Sigmoid colon (tissue), 7 donors: ENCODE measurements at regions of chr19 and their contacts with region 1.

Region 1: DNA sequence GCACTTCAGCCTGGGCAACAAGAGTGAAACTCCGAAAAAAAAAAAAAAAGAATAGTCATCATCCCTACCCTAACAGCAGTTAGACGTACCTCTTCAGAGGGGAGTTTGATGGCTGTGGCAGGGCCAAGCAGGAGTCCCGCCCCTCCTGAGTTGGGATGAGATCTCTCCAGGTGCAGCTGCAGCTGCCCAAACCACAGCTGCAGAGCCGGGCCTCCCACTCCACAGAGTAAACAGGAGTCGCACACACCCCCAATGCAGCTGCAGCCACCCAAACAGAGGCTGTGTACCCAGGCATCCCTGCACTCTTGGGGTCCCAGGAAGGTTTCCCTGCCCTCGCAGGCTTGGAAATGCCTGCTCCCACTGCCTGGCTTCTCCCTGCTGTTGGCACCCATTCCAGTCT is 17.4 kb upstream of the MLLT1 start:
- DNase-seq: no peak
- H3K4me3 ChIP-seq: no peak overlapping the region
- H3K27ac ChIP-seq: no peak overlapping the region
- H3K4me1 ChIP-seq: no peaks in the 10 kb centered on the region
- H3K27me3 ChIP-seq: no peaks in the 10 kb centered on the region
- CTCF ChIP-seq: no peak
- EP300 ChIP-seq: no peak
- POLR2A ChIP-seq: no peak

Region 2: GRCh38 chr19:6167115-6167514 is 130.1 kb before region 1 on chr19:
- intact Hi-C with region 1: loop called (anchors 2 kb)
- DNase-seq: no peak
- H3K4me3 ChIP-seq: no peak overlapping the region
- H3K27ac ChIP-seq: no peak overlapping the region
- H3K4me1 ChIP-seq: no peaks in the 10 kb centered on the region
- H3K27me3 ChIP-seq: no peaks in the 10 kb centered on the region
- CTCF ChIP-seq: no peak
- EP300 ChIP-seq: no peak
- POLR2A ChIP-seq: no peak

Region 3: DNA sequence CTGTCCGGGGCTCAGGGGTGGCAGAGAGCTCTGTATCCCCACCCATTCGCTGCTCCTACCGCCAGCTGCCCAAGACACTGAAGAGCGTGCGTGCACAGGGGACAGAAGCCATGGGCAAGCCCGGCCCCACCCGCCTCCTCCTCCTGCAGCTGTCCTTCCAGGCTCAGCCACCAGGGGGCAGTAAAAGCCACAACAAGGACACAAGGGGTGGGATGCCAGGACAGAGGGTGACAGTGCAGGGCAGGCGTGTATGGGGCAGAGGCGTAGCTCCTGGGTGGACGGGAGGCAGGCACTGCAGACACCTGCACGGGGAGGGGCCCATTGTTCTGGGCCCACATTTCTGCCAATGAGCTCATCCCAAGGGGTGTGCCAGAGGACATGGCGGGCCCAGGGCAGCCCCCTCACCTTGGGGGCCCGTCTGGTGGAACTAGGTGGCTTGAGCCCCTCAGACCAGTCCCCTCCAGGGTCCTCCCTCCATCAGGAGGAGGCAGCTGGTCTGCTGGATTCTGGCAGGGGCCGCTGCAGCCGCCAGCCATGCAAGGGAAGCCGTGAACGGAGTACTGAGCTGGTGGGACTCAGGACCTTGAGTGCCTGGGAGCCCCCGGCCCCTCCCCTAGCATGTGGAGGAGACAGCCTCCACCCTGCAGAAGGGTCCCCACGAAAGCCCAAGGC is 78.6 kb before region 1 on chr19:
- intact Hi-C with region 1: loop called (anchors 2 kb)
- DNase-seq: peak; percentile 95
- H3K4me3 ChIP-seq: no peak overlapping the region
- H3K27ac ChIP-seq: peak overlapping the region; percentile 7 to 65 (median 55)
- H3K4me1 ChIP-seq: peaks cover 0 to 50% (median 40%) of the 10 kb centered on the region in 4 donors
- H3K27me3 ChIP-seq: no peaks in the 10 kb centered on the region
- CTCF ChIP-seq: peak; percentile 98 to 100 (median 99)
- EP300 ChIP-seq: no peak
- POLR2A ChIP-seq: no peak

Region 4: GRCh38 chr19:6354098-6354674 is 57.0 kb after region 1 on chr19:
- intact Hi-C with region 1: no loop called
- DNase-seq: no peak
- H3K4me3 ChIP-seq: no peak overlapping the region
- H3K27ac ChIP-seq: no peak overlapping the region
- H3K4me1 ChIP-seq: no peaks in the 10 kb centered on the region
- H3K27me3 ChIP-seq: no peaks in the 10 kb centered on the region
- CTCF ChIP-seq: no peak
- EP300 ChIP-seq: no peak
- POLR2A ChIP-seq: no peak